ENCODE measurements at regions of chr6 and their contacts with region 1.

Region 1: DNA sequence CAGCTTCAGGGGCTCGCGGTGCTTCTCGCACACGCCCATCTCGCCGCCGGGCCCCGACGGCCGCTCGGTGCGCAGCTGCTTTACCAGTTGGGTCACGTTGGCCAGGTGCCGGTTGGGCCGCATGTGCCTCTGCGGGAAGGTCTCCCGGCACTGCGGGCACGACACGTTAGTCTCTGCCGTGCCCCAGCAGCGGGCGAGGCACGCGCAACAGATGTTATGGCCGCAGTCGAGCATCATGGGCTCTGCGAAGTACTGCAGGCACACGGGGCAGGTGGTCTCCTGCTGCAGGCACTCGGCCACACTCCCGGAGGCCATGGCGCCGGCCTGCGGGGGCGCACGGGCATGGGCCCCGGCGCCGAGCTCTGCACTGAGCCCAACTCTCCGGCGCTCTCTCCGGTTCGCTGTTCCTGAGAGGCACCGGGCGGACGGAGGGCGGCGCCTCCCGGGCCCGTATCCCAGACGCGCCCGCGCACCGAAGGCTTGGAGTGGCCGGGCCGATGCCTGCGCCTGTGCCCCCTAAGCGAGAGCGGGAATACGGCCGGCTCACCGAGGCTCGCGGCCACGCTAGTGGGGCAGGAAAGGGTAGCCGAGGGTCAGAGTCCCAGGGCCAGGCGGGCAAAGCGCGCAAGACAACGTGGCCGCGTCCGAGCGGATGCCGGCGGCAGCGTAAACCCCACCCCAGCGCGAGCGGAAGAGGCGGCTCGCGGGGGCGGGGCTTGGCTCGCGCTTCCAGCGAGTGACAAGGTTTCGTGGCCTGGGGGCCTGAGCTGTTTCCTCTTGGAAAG is at the start of gene TRIM27:
- DNase-seq: peak; percentile 63 to 88
- H3K4me3 ChIP-seq: peak within 1 kb of the TSS; percentile 87 to 98 (median 94)
- H3K27ac ChIP-seq: peak within 1 kb of the TSS; percentile 84
- H3K4me1 ChIP-seq: peaks cover 0 to 12% (median 6%) of the 10 kb centered on the region in 4 experiments; a peak in 5 of 7 replicates
- H3K27me3 ChIP-seq: no peaks in the 10 kb centered on the region
- CTCF ChIP-seq: peak in 1 of 3 experiments; percentile 5; a peak in 1 of 4 replicates
- EP300 ChIP-seq: no peak
- POLR2A ChIP-seq: peak; percentile 84 to 92
- RAD21 ChIP-seq: no peak
- total RNA-seq, gene TRIM27: 76.4 and 78.9 TPM in 2 replicates

Region 2: GRCh38 chr6:28838634-28839442 is 84.7 kb before region 1 on chr6:
- CTCF ChIA-PET with region 1: interaction called, 6 read pairs
- POLR2A ChIA-PET with region 1: interaction called, 13 read pairs
- DNase-seq: peak; percentile 69 to 96
- H3K4me3 ChIP-seq: peak overlapping the region; percentile 80 to 96 (median 88)
- H3K27ac ChIP-seq: no peak overlapping the region
- H3K4me1 ChIP-seq: no peaks in the 10 kb centered on the region
- H3K27me3 ChIP-seq: no peaks in the 10 kb centered on the region; a peak in 1 of 7 replicates
- CTCF ChIP-seq: peak; percentile 61 to 89 (median 74)
- EP300 ChIP-seq: no peak
- POLR2A ChIP-seq: no peak
- RAD21 ChIP-seq: peak; percentile 38 to 47

Region 3: DNA sequence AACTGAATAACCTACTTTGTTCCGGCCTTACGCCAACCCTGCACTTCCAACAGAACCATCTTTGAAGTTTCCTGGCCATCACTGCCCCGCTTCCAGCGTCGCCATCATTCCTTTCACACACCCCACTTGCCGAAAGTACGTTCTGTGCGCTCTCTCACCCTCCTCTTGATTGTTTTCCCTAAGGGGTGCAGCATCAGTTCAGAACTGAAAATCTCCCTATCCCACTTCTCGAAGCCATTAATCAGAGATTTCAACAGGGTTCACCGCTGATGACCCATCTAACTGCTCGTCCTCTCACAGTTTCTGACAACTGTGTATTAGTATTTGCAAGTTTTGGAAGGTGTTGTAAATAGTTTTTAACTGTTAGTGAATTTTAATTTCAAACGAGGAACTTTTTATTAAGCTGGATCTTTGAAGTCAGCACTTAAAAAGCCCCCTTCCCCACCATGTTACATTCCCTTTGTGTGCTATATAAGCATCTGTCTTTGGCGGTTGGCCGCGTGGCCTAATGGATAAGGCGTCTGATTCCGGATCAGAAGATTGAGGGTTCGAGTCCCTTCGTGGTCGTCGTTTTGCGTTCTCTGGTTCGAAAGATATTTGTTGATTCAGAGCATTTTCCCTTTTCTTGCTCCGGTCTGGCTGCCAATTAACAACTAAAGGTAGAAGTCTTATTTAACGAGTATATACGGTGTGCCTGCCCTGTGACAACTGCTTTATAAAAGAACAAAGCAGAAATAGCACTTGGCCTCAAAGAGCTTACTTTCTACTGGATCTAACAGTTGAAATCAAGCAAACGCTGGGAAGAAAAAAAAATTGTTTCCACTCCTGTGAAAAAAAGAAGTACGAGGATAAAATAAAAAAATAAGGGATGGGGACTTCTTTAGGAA is 42.4 kb before region 1 on chr6:
- CTCF ChIA-PET with region 1: interaction called, 3 read pairs
- POLR2A ChIA-PET with region 1: interaction called, 17 read pairs
- DNase-seq: peak in 1 of 2 experiments; percentile 96
- H3K4me3 ChIP-seq: peak overlapping the region; percentile 84 to 99 (median 86)
- H3K27ac ChIP-seq: peak overlapping the region; percentile 40; the same call in 1 of the 2 replicates
- H3K4me1 ChIP-seq: peaks cover 0 to 4% (median under 1%) of the 10 kb centered on the region in 4 experiments; a peak in 3 of 7 replicates
- H3K27me3 ChIP-seq: no peaks in the 10 kb centered on the region
- CTCF ChIP-seq: no peak
- EP300 ChIP-seq: no peak
- POLR2A ChIP-seq: no peak
- RAD21 ChIP-seq: no peak

Region 4: GRCh38 chr6:28900577-28901256 is 22.8 kb before region 1 on chr6:
- CTCF ChIA-PET with region 1: interaction called, 5 read pairs
- POLR2A ChIA-PET with region 1: interaction called, 90 read pairs
- DNase-seq: no peak
- H3K4me3 ChIP-seq: no peak overlapping the region
- H3K27ac ChIP-seq: no peak overlapping the region
- H3K4me1 ChIP-seq: no peaks in the 10 kb centered on the region
- H3K27me3 ChIP-seq: no peaks in the 10 kb centered on the region
- CTCF ChIP-seq: no peak
- EP300 ChIP-seq: no peak
- POLR2A ChIP-seq: no peak; a peak in 1 of 3 replicates
- RAD21 ChIP-seq: no peak

Region 5: DNA sequence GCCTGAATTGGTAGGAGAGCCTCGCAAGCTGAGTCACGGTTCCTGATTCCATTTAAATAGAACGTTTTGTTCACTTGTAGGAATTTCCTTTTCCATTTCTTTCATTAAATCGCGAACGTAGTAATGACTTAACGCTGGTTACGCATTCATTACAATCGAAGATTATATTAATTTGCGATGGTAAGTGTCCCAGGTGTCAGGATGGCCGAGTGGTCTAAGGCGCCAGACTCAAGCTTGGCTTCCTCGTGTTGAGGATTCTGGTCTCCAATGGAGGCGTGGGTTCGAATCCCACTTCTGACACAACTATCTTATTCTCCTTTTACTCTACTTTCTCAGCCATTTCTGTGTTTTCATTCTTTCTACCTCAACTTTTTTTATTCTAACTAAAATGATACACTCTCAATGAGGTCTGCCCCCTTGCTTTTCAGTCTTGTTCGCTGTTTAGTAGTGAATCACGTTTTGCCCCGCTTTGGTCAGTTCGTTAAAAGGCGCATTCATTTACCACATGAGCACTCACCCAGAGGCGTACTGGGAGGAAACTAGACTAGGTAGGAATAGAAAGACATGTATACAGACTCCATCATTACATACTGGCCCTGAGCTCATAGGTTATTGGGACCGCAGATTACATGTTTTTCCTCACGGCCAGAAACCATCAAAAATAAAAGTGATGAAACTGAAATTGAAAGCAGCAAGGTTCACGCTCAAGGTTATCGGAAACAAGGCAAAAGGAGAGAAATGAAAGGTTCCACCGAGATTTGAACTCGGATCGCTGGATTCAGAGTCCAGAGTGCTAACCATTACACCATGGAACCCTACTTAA is 17.6 kb after region 1 on chr6:
- CTCF ChIA-PET with region 1: interaction called, 8 read pairs
- POLR2A ChIA-PET with region 1: interaction called, 53 read pairs
- DNase-seq: peak; percentile 70 to 86
- H3K4me3 ChIP-seq: peak overlapping the region; percentile 50 to 90 (median 71)
- H3K27ac ChIP-seq: no peak overlapping the region
- H3K4me1 ChIP-seq: no peaks in the 10 kb centered on the region
- H3K27me3 ChIP-seq: no peaks in the 10 kb centered on the region
- CTCF ChIP-seq: no peak
- EP300 ChIP-seq: no peak
- POLR2A ChIP-seq: no peak
- RAD21 ChIP-seq: no peak

Region 6: DNA sequence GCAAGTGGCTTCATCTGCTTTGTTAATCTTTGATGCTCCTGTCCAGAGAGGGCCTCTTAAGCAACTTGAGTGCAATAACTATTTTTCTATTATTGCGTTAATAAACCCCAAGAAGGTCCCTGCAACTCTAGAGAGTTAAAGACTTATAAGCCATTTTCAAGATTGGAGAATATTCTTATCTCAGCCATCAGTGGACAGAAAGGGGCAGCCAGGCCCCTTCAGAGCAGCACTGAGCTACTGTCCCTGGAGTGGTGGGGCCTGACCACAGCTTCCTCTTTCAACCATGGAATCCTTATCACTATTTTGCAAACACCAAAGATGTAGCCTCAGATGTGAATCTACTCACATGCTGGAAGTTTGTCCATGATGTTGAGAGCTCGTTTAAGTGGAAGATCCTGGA is 567.0 kb after region 1 on chr6:
- CTCF ChIA-PET with region 1: no interaction called
- POLR2A ChIA-PET with region 1: no interaction called
- DNase-seq: no peak
- H3K4me3 ChIP-seq: no peak overlapping the region
- H3K27ac ChIP-seq: no peak overlapping the region
- H3K4me1 ChIP-seq: no peaks in the 10 kb centered on the region
- H3K27me3 ChIP-seq: no peaks in the 10 kb centered on the region
- CTCF ChIP-seq: no peak
- EP300 ChIP-seq: no peak
- POLR2A ChIP-seq: no peak
- RAD21 ChIP-seq: no peak